Caco-2 (cell line): ENCODE measurements at regions of chr1 and their contacts with region 1.

Region 1: GRCh38 chr1:86965012-86965826 is 50.8 kb downstream of the HS2ST1 start:
- DNase-seq: peak in 1 of 2 experiments; percentile 50
- H3K4me3 ChIP-seq: no peak overlapping the region
- H3K4me3 Mint-ChIP-seq: no peak overlapping the region
- H3K27ac Mint-ChIP-seq: no peak overlapping the region
- H3K4me1 ChIP-seq: peaks cover 13% of the 10 kb centered on the region; the same call in 1 of the 2 replicates
- H3K4me1 Mint-ChIP-seq: no peaks in the 10 kb centered on the region
- H3K27me3 ChIP-seq: no peaks in the 10 kb centered on the region
- H3K27me3 Mint-ChIP-seq: no peaks in the 10 kb centered on the region
- CTCF ChIP-seq: peak; percentile 31 to 53

Region 2: GRCh38 chr1:86621286-86621685 is 343.9 kb before region 1 on chr1:
- CTCF ChIA-PET with region 1: no interaction called
- POLR2A ChIA-PET with region 1: no interaction called
- intact Hi-C with region 1: no loop called
- DNase-seq: no peak
- H3K4me3 ChIP-seq: no peak overlapping the region
- H3K4me3 Mint-ChIP-seq: no peak overlapping the region
- H3K27ac Mint-ChIP-seq: no peak overlapping the region
- H3K4me1 ChIP-seq: no peaks in the 10 kb centered on the region
- H3K4me1 Mint-ChIP-seq: peaks cover 6% of the 10 kb centered on the region
- H3K27me3 ChIP-seq: no peaks in the 10 kb centered on the region
- H3K27me3 Mint-ChIP-seq: no peaks in the 10 kb centered on the region
- CTCF ChIP-seq: no peak

Region 3: DNA sequence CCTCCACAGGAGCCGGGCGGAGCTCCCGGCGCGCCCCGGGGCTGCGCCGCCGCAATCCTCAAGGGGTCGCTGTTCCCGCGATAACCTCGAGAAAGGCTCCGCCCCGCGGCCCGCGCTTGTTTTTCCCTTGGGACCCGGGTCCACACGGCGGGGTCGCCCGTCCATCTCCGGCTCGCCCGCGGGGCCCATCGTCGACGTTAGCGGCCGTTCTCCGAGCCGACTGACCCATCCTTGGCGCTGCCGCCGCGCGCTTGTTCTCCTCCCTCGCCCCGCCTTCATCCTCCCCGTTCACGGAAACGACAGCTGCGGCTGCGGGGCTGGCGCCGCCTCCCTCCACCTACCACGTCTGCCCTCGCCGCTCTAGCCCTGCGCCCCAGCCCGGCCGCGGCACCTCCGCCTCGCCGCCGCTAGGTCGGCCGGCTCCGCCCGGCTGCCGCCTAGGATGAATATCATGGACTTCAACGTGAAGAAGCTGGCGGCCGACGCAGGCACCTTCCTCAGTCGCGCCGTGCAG is 260.7 kb before region 1 on chr1 and contains the start of gene SH3GLB1:
- CTCF ChIA-PET with region 1: interaction called, 3 read pairs
- POLR2A ChIA-PET with region 1: no interaction called
- intact Hi-C with region 1: loop called (anchors 10 kb)
- DNase-seq: peak; percentile 91 to 92
- H3K4me3 ChIP-seq: peak within 1 kb of the TSS; percentile 82
- H3K4me3 Mint-ChIP-seq: peak within 1 kb of the TSS; percentile 98
- H3K27ac Mint-ChIP-seq: peak within 1 kb of the TSS; percentile 95
- H3K4me1 ChIP-seq: peaks cover 10% of the 10 kb centered on the region
- H3K4me1 Mint-ChIP-seq: peaks cover 7% of the 10 kb centered on the region
- H3K27me3 ChIP-seq: no peaks in the 10 kb centered on the region
- H3K27me3 Mint-ChIP-seq: no peaks in the 10 kb centered on the region
- CTCF ChIP-seq: peak; percentile 68 to 76
- total RNA-seq, gene SH3GLB1: 48.7 and 50.6 TPM in 2 replicates

Region 4: GRCh38 chr1:86833461-86834215 is 131.6 kb before region 1 on chr1:
- CTCF ChIA-PET with region 1: no interaction called
- POLR2A ChIA-PET with region 1: no interaction called
- intact Hi-C with region 1: loop called (anchors 1 kb)
- DNase-seq: peak; percentile 74 to 80
- H3K4me3 ChIP-seq: no peak overlapping the region
- H3K4me3 Mint-ChIP-seq: no peak overlapping the region
- H3K27ac Mint-ChIP-seq: no peak overlapping the region
- H3K4me1 ChIP-seq: peaks cover 10% of the 10 kb centered on the region
- H3K4me1 Mint-ChIP-seq: peaks cover 25% of the 10 kb centered on the region
- H3K27me3 ChIP-seq: no peaks in the 10 kb centered on the region
- H3K27me3 Mint-ChIP-seq: no peaks in the 10 kb centered on the region
- CTCF ChIP-seq: peak; percentile 40 to 47

Region 5: GRCh38 chr1:86887479-86888162 is 77.6 kb before region 1 on chr1:
- CTCF ChIA-PET with region 1: no interaction called
- POLR2A ChIA-PET with region 1: no interaction called
- intact Hi-C with region 1: no loop called
- DNase-seq: no peak
- H3K4me3 ChIP-seq: no peak overlapping the region
- H3K4me3 Mint-ChIP-seq: no peak overlapping the region
- H3K27ac Mint-ChIP-seq: no peak overlapping the region
- H3K4me1 ChIP-seq: no peaks in the 10 kb centered on the region
- H3K4me1 Mint-ChIP-seq: no peaks in the 10 kb centered on the region
- H3K27me3 ChIP-seq: no peaks in the 10 kb centered on the region
- H3K27me3 Mint-ChIP-seq: no peaks in the 10 kb centered on the region
- CTCF ChIP-seq: no peak

Region 6: DNA sequence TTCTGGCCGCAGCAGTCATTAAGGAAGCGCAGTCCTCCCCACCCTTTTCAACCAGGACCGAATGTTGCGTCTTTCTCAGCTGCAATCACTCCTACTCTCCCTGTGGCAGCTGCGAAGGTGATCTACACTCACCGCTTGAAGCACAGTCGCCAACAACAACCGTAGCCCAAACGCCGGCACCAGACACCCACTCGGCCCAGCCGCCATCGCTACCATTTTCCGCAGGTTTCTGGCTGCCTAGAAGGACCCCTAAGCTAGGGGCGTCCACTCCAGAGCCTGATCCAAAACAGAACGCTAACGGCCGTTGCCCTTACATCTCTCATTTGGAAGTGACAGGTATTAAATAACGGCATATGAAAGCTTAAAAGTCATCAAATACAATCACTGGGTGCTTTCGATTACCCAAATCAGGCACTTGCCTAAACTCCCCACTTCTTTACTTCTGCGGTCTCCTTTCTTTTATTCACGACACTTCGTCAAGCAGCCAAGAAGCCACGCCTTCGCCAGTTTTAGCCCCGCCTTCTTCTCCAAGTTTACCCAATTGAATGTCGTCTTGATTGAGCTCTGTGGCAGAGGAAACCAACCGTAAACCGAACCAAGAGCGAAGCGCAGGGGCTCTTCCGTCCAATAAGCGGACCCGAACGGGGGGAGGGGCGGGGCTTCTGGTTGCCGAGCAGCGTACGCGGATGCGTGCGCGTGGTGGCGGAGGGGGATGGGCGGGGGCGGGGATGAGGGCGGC is 51.2 kb before region 1 on chr1 and contains the start of gene SELENOF:
- CTCF ChIA-PET with region 1: interaction called, 4 read pairs
- POLR2A ChIA-PET with region 1: interaction called, 3 read pairs
- intact Hi-C with region 1: loop called (anchors 1 kb)
- DNase-seq: peak; percentile 96 to 98
- H3K4me3 ChIP-seq: peak within 1 kb of the TSS; percentile 92
- H3K4me3 Mint-ChIP-seq: no peak within 1 kb of the TSS
- H3K27ac Mint-ChIP-seq: no peak within 1 kb of the TSS
- H3K4me1 ChIP-seq: no peaks in the 10 kb centered on the region; the same call in none of the 2 replicates
- H3K4me1 Mint-ChIP-seq: peaks cover 11% of the 10 kb centered on the region
- H3K27me3 ChIP-seq: no peaks in the 10 kb centered on the region
- H3K27me3 Mint-ChIP-seq: no peaks in the 10 kb centered on the region
- CTCF ChIP-seq: no peak
- total RNA-seq, gene SELENOF: 161 and 166 TPM in 2 replicates

Region 7: GRCh38 chr1:87084244-87084836 is 119.1 kb after region 1 on chr1:
- CTCF ChIA-PET with region 1: no interaction called
- POLR2A ChIA-PET with region 1: no interaction called
- intact Hi-C with region 1: loop called (anchors 1 kb)
- DNase-seq: no peak
- H3K4me3 ChIP-seq: no peak overlapping the region
- H3K4me3 Mint-ChIP-seq: no peak overlapping the region
- H3K27ac Mint-ChIP-seq: no peak overlapping the region
- H3K4me1 ChIP-seq: no peaks in the 10 kb centered on the region
- H3K4me1 Mint-ChIP-seq: no peaks in the 10 kb centered on the region
- H3K27me3 ChIP-seq: no peaks in the 10 kb centered on the region
- H3K27me3 Mint-ChIP-seq: no peaks in the 10 kb centered on the region
- CTCF ChIP-seq: peak; percentile 5 to 29

Region 8: GRCh38 chr1:87115317-87115890 is 150.2 kb after region 1 on chr1:
- CTCF ChIA-PET with region 1: no interaction called
- POLR2A ChIA-PET with region 1: no interaction called
- intact Hi-C with region 1: no loop called
- DNase-seq: no peak
- H3K4me3 ChIP-seq: no peak overlapping the region
- H3K4me3 Mint-ChIP-seq: no peak overlapping the region
- H3K27ac Mint-ChIP-seq: no peak overlapping the region
- H3K4me1 ChIP-seq: 0 out of 2 replicates have a peak, but pooled peaks cover 3% of the 10 kb centered on the region
- H3K4me1 Mint-ChIP-seq: peaks cover 4% of the 10 kb centered on the region
- H3K27me3 ChIP-seq: no peaks in the 10 kb centered on the region
- H3K27me3 Mint-ChIP-seq: no peaks in the 10 kb centered on the region
- CTCF ChIP-seq: no peak